ENCODE measurements at regions of chr2 and their contacts with region 1.

Region 1: DNA sequence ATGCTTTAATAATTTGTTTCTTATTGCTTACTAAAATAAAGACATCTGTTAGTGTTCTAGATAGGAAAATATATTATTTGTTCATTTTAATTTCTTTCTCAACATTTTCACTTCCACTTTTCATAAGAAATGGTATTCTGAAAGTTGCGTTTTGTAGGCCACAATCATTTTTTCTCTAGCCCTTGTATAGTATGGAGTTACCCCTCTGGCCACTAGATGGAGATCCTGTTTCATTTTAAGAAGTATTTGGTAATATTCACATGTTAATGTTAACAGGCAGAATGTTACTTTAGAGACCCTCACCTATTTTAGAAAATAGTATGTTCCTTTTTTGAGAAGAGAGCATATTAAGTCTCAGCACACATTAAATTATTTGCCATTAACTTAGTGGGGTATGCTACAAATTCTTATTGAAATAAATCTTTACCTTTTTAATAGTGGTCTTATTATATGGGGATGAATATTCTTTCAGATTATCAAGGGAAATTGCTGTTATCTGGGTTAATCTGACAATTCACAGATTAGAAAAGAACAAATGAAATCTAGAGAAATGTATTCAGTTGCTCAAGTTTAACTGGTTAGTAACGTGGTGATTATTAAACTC is 73.9 kb upstream of the TTC27 start:
- DNase-seq: peak in 4 of 5 donors; percentile 17 to 29 (median 25)
- H3K4me3 ChIP-seq: no peak overlapping the region
- H3K4me3 Mint-ChIP-seq: no peak overlapping the region
- H3K27ac ChIP-seq: no peak overlapping the region
- H3K27ac Mint-ChIP-seq: peak overlapping the region in 1 of 7 donors; percentile 42
- H3K4me1 ChIP-seq: no peaks in the 10 kb centered on the region
- H3K4me1 Mint-ChIP-seq: peaks cover 0 to 2% (median 0%) of the 10 kb centered on the region in 4 donors
- H3K27me3 ChIP-seq: no peaks in the 10 kb centered on the region
- H3K27me3 Mint-ChIP-seq: no peaks in the 10 kb centered on the region

Region 2: DNA sequence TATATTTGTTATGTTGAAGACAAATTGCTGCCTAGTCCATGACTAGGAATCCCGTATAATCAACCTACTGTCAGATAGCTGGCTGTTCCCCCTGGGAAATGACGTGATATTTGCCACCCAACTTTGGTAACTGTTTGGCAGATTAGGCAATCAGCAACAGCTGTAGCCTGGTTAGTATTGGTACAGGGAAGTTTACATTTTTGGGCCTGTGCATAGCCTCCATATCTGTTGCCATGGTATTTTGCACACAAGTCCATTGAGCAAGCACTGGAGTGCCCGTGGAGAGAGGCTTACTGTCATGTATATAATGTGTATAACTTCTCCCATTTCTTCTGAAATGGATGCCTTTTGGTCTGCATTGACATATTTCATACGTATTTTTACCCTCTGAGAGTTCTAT is 169.4 kb before region 1 on chr2:
- CTCF ChIA-PET with region 1: no interaction called
- POLR2A ChIA-PET with region 1: no interaction called
- intact Hi-C with region 1: no loop called
- DNase-seq: no peak
- H3K4me3 ChIP-seq: no peak overlapping the region
- H3K4me3 Mint-ChIP-seq: no peak overlapping the region
- H3K27ac ChIP-seq: no peak overlapping the region
- H3K27ac Mint-ChIP-seq: peak overlapping the region in 1 of 7 donors; percentile 5
- H3K4me1 ChIP-seq: no peaks in the 10 kb centered on the region
- H3K4me1 Mint-ChIP-seq: peaks cover 16 to 23% (median 20%) of the 10 kb centered on the region in 4 donors
- H3K27me3 ChIP-seq: no peaks in the 10 kb centered on the region
- H3K27me3 Mint-ChIP-seq: no peaks in the 10 kb centered on the region

Region 3: GRCh38 chr2:32464431-32464830 is 89.5 kb before region 1 on chr2:
- CTCF ChIA-PET with region 1: no interaction called
- POLR2A ChIA-PET with region 1: no interaction called
- intact Hi-C with region 1: no loop called
- DNase-seq: no peak
- H3K4me3 ChIP-seq: no peak overlapping the region
- H3K4me3 Mint-ChIP-seq: no peak overlapping the region
- H3K27ac ChIP-seq: no peak overlapping the region
- H3K27ac Mint-ChIP-seq: peak overlapping the region in 1 of 7 donors; percentile 47
- H3K4me1 ChIP-seq: no peaks in the 10 kb centered on the region
- H3K4me1 Mint-ChIP-seq: peaks cover 0 to 1% (median 0%) of the 10 kb centered on the region in 4 donors
- H3K27me3 ChIP-seq: no peaks in the 10 kb centered on the region
- H3K27me3 Mint-ChIP-seq: no peaks in the 10 kb centered on the region

Region 4: DNA sequence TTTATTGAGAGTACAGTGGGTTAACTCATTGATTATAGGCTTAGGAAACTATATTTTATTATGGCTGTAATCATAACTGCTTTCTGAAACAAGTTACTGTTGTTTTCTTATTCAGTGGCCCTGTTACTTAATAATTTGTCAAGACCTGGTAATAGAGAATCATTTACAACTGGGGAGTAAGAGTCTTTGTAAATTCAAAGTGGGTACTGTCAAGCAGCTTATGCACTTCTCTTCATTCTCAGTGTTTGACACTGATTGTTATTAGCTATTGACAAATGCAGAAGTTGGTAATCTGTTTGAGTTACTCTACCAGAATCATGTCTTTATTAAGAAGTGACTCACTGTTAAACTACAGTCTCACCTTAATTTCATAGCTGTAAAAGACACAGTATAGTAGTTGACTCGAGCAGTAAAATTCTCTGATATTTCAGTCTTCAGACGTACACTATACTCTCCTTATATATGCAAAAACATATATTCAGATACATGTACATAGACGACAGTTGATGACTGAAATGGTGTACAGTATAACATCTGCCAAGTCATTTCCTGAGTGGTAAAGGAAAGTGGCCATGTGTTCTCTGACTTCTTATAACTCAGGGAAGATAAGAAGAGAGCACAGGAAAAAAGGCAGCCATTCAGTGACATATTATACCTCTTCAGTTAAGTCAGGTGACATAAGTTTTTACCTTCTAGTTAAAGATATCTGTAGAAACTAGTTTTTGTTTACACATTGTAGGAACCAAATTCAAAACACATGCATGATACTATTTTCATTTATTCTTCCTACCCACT is 37.9 kb after region 1 on chr2:
- CTCF ChIA-PET with region 1: no interaction called
- POLR2A ChIA-PET with region 1: no interaction called
- intact Hi-C with region 1: loop called (anchors 5 kb)
- DNase-seq: peak in 4 of 5 donors; percentile 1 to 33 (median 15)
- H3K4me3 ChIP-seq: no peak overlapping the region
- H3K4me3 Mint-ChIP-seq: peak overlapping the region in 2 of 8 donors; percentile 10 to 50
- H3K27ac ChIP-seq: no peak overlapping the region
- H3K27ac Mint-ChIP-seq: peak overlapping the region; percentile 17 to 70 (median 57)
- H3K4me1 ChIP-seq: peaks cover 24% of the 10 kb centered on the region
- H3K4me1 Mint-ChIP-seq: peaks cover 27 to 39% (median 33%) of the 10 kb centered on the region in 4 donors
- H3K27me3 ChIP-seq: no peaks in the 10 kb centered on the region
- H3K27me3 Mint-ChIP-seq: no peaks in the 10 kb centered on the region

Measured in CD4-positive, alpha-beta memory T cell (primary cell).